Sigmoid colon (tissue), 7 donors: ENCODE measurements at regions of chr3 and their contacts with region 1.

Region 1: GRCh38 chr3:177359593-177360357 is 162.5 kb upstream of the TBL1XR1 start:
- DNase-seq: peak; percentile 98
- H3K4me3 ChIP-seq: peak overlapping the region; percentile 6 to 47 (median 37)
- H3K27ac ChIP-seq: peak overlapping the region; percentile 84 to 91 (median 88)
- H3K4me1 ChIP-seq: peaks cover 0 to 63% (median 58%) of the 10 kb centered on the region in 4 donors
- H3K27me3 ChIP-seq: no peaks in the 10 kb centered on the region
- CTCF ChIP-seq: no peak
- EP300 ChIP-seq: peak; percentile 88 to 98 (median 97)
- POLR2A ChIP-seq: peak in 1 of 2 donors; percentile 43

Region 2: DNA sequence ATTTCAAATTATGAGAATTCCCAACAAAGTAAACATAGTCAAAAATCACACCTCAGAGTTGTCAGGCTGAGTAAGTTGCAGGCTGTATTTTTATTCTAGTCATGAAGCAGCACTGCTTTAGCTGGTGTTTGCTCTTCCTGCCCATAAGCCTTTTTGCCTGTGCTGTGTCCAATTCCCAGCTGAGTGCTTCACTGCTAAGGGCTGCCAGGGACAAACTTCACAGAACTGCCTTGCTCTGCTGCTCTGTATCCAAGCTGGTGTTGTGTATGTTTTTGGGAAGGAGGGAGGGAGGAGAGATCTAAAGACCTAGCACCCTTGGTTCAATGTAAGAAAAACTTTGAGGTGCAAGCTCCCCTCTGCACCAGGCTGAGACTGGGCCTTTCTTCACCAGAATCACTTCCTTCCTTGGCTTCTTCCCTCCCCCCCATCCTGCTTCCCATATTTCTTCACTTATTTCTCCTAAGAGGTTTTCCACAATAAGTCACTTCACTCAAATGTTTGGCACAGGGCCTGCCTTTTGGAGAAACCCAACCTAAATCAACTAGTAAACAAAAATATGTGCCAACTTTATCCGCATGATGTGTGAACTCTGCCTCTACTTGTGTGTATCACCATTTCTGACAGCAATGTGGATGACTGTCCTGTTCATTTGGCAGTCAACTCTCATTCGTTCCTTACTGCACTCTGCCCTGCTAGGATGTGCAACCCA is 318.6 kb before region 1 on chr3:
- intact Hi-C with region 1: loop called (anchors 5 kb)
- DNase-seq: peak; percentile 84
- H3K4me3 ChIP-seq: no peak overlapping the region
- H3K27ac ChIP-seq: peak overlapping the region in 3 of 4 donors; percentile 78 to 79 (median 79)
- H3K4me1 ChIP-seq: peaks cover 0 to 42% (median 29%) of the 10 kb centered on the region in 4 donors
- H3K27me3 ChIP-seq: no peaks in the 10 kb centered on the region
- CTCF ChIP-seq: no peak
- EP300 ChIP-seq: no peak
- POLR2A ChIP-seq: no peak

Region 3: GRCh38 chr3:177263615-177264368 is 96.0 kb before region 1 on chr3:
- intact Hi-C with region 1: no loop called
- DNase-seq: no peak
- H3K4me3 ChIP-seq: no peak overlapping the region
- H3K27ac ChIP-seq: peak overlapping the region in 2 of 4 donors; percentile 15 to 60
- H3K4me1 ChIP-seq: peaks cover 0 to 10% (median 3%) of the 10 kb centered on the region in 4 donors
- H3K27me3 ChIP-seq: no peaks in the 10 kb centered on the region
- CTCF ChIP-seq: no peak
- EP300 ChIP-seq: no peak
- POLR2A ChIP-seq: no peak

Region 4: DNA sequence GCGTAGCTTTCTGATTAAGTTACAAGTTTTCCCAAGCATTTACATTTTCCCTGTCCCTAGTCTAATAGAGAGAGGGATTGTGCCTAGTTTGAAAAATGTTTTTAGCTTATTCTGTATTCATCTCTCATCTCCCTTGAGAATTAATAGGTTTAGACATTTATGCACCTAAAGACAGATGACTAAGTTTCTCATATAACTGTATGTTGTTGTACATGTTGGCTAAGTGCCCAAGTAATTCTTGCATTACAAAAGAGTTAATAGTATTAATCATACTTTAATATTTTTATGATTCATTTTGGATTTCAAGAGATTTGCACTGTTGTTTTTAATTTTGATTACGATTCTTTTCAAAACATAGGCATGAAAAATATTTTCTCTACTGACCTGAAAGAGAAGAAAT is 53.5 kb before region 1 on chr3:
- intact Hi-C with region 1: no loop called
- DNase-seq: no peak
- H3K4me3 ChIP-seq: no peak overlapping the region
- H3K27ac ChIP-seq: no peak overlapping the region
- H3K4me1 ChIP-seq: no peaks in the 10 kb centered on the region
- H3K27me3 ChIP-seq: no peaks in the 10 kb centered on the region
- CTCF ChIP-seq: no peak
- EP300 ChIP-seq: no peak
- POLR2A ChIP-seq: no peak

Region 5: DNA sequence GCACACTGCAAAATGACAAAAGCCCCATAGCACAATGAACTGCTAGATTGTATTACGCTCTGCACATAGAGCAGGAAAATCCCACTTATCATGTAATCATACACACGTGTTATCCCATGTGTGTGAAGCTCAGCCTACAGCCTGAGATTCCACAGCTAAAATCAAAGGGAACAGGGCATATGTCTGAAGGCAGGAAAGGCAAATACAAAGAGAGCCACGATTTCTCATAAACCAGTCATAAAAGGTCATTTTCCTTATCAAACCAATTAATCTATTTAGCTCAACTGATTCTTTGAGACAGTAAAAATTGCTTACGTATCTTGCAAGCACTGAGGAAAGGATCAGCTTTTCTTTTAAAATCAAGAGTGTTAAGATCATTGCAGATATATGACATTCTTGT is 36.9 kb after region 1 on chr3:
- intact Hi-C with region 1: no loop called
- DNase-seq: no peak
- H3K4me3 ChIP-seq: no peak overlapping the region
- H3K27ac ChIP-seq: no peak overlapping the region
- H3K4me1 ChIP-seq: no peaks in the 10 kb centered on the region
- H3K27me3 ChIP-seq: no peaks in the 10 kb centered on the region
- CTCF ChIP-seq: no peak
- EP300 ChIP-seq: no peak
- POLR2A ChIP-seq: no peak

Region 6: GRCh38 chr3:177441813-177442646 is 82.3 kb after region 1 on chr3:
- intact Hi-C with region 1: loop called (anchors 5 kb)
- DNase-seq: peak; percentile 82
- H3K4me3 ChIP-seq: peak overlapping the region; percentile 15 to 50 (median 35)
- H3K27ac ChIP-seq: peak overlapping the region; percentile 80 to 88 (median 81)
- H3K4me1 ChIP-seq: peaks cover 0 to 74% (median 57%) of the 10 kb centered on the region in 4 donors
- H3K27me3 ChIP-seq: no peaks in the 10 kb centered on the region
- CTCF ChIP-seq: no peak
- EP300 ChIP-seq: no peak
- POLR2A ChIP-seq: no peak

Region 7: DNA sequence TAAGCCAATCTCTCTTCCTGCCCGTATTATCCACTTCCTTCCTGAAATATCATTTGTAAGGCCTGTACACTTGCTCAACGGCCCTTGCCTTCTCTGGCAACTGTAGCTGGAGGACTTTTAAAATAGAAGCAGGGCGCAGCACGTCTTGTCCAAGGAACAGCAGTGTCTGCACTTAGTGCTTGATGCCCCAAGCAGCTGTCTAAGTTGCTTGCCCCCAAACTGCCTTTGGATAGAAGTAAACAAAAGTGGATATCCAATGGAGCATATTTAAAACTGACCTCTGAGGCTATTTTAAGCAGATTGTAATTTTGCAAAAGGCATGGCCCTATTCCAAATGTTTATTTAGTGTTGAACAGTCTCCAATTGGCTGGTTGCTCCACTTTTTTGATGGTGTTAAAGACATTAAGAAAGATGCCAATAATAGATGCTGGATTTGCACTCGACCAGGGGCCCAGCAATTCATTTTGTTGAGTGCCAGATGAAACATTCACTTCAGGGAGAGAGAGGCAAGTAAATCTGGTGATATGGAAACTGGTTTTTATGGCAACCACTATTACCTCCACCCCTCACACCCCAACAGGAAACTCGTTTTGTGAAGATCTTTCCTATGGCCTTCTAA is 364.4 kb after region 1 on chr3:
- intact Hi-C with region 1: loop called (anchors 10 kb)
- DNase-seq: peak; percentile 89
- H3K4me3 ChIP-seq: no peak overlapping the region
- H3K27ac ChIP-seq: peak overlapping the region; percentile 59 to 71 (median 68)
- H3K4me1 ChIP-seq: peaks cover 0 to 51% (median 42%) of the 10 kb centered on the region in 4 donors
- H3K27me3 ChIP-seq: no peaks in the 10 kb centered on the region
- CTCF ChIP-seq: no peak
- EP300 ChIP-seq: peak in 2 of 4 donors; percentile 34 to 52
- POLR2A ChIP-seq: no peak

Region 8: DNA sequence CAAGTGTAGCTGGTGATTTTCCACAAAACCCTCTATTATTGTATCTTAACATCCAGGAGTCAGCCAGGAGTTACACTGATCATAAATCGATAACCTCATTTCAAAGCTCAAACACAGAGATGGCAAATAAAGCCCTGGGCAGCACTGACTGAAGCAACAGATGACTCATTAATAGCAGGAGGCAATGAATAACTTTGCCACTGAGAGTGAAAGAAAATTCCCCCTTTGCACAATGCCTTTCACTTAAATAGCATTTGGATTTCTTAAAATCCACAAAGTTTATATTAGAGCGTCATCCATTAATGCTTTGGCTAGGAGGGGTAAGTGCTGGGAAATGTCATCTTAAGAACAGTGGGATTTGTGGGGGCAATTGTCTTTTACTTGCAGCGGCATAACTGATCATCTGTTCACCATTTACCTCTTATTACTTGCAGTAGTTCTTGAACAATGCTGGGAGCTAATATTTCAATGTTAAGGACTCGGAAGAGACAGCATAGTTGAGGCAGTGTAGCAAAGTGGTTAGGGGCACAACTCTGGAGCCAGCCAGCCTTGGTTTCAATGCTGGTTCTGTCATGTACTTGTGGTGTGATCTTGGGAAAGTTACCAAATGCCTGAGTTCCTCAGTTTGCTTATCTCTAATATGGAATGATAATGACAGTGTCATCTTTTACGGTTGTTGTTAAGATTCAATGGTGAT is 467.9 kb after region 1 on chr3:
- intact Hi-C with region 1: loop called (anchors 5 kb)
- DNase-seq: no peak
- H3K4me3 ChIP-seq: no peak overlapping the region
- H3K27ac ChIP-seq: peak overlapping the region; percentile 79 to 85 (median 84)
- H3K4me1 ChIP-seq: peaks cover 0 to 83% (median 68%) of the 10 kb centered on the region in 4 donors
- H3K27me3 ChIP-seq: no peaks in the 10 kb centered on the region
- CTCF ChIP-seq: no peak
- EP300 ChIP-seq: no peak
- POLR2A ChIP-seq: no peak

Region 9: DNA sequence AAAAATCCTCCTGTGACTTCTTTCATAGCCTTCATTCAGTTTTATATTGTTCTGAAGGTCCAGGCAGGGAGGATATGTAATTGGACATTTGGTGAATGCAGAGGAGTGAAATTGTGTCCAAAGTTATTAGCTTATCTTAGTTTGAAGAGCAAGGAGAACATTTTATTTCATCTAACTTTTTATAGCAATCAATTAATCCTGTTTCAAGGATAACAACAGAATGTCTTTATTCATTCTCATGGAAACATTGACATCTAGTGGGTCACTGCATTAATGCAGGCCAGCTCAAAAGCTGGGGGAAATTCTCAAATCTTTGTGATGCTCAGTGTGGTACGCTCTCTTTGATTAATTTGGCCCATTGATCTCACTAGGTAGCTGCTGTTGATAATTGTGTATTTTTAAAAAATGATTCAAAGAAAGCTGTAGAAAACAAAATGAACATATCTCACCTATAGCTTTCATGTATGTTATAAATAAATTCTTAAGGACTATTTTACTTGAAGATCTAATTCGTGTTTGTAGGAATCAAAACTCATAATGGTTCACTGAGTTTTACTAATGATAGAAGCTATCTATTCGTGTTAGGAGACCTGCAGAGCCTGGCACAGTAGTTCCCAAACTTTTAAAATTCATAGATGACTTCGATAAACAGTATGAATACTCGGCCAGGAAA is 1025.6 kb after region 1 on chr3:
- intact Hi-C with region 1: loop called (anchors 2 kb)
- DNase-seq: no peak
- H3K4me3 ChIP-seq: no peak overlapping the region
- H3K27ac ChIP-seq: peak overlapping the region; percentile 51 to 72 (median 71)
- H3K4me1 ChIP-seq: peaks cover 0 to 45% (median 34%) of the 10 kb centered on the region in 4 donors
- H3K27me3 ChIP-seq: no peaks in the 10 kb centered on the region
- CTCF ChIP-seq: peak; percentile 82 to 92 (median 86)
- EP300 ChIP-seq: no peak
- POLR2A ChIP-seq: no peak